Activated T-helper 2 cell treated with anti-CD3 and anti-CD28 coated beads, Interferon-gamma antibody, Interleukin-2, Interleukin-4, amounts not matched to agents 10 μg/mL and 5 μg/mL and 100 μg/mL, durations not matched to agents 14 hours and 24 hours and 36 hours (primary cell): ENCODE measurements at regions of chr18 and their contacts with region 1.

Region 1: GRCh38 chr18:5630057-5630899 is 86.5 kb upstream of the EPB41L3 start:
- DNase-seq: peak; percentile 24
- H3K4me3 Mint-ChIP-seq: no peak overlapping the region
- H3K27ac Mint-ChIP-seq: no peak overlapping the region
- H3K4me1 Mint-ChIP-seq: peaks cover 7% of the 10 kb centered on the region
- H3K27me3 Mint-ChIP-seq: peaks cover 30% of the 10 kb centered on the region

Region 2: DNA sequence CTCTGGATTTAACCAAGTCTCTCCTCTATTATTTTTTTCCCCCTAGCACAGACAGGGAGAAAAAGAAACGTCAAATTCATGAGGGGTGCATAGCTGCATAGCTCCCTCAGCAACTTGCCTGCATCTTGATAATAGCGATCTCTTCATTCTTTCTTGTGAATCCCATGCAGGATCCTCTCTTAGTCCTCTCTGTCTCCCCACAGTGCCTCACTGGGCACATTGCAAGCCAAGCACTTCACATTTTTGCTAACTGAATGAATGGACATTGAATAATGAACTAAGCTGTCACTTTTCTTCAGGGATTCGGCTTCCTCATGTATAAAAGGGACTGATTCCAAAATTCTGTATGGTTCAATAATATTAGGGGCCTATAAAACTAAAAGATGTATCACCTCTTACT is 83.6 kb before region 1 on chr18:
- intact Hi-C with region 1: loop called (anchors 10 kb)
- DNase-seq: no peak
- H3K4me3 Mint-ChIP-seq: no peak overlapping the region
- H3K27ac Mint-ChIP-seq: no peak overlapping the region
- H3K4me1 Mint-ChIP-seq: peaks cover 2% of the 10 kb centered on the region
- H3K27me3 Mint-ChIP-seq: peaks cover 32% of the 10 kb centered on the region

Region 3: DNA sequence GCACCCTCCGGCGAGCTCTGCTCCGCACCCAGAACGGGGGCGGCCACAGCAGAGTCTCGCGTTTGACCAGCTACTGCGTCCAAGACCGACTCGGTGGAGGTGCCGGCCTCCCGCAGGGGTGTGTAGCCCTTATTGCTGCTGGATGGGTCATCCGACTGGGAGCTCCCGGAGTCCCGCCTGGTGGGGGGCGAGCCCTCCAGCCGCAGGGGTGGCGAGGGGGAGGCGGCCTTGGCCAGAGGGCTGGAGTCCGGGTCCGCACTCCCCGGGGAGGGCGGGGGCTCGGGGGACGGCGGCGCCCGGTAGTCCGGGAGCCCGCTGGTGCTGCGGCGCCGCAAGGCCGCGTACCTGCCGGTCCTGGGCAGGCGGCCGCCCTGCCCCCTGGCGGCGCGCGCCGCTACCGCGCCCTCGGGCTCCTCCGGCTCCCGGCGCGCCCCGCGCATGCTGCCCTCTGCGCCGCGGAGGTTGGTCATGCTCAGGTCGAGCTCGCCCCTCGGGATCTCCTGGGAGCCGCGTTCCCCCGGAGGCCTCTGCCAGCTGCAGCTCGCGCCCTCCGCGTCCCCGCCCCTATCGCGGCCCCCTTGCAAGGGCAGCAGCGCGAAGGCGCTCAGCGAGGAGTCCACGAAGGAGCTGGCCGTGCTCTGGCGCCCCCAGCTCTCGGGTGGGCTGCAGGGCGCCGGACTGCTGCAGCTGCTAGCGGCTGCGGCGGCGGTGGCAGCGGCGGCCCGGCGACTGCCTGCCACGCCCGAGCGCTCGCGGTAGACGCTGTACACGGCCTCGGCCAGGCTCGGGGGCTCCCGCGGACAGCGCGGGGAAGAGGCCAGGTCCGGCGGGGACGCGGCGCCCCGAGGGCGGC is 260.3 kb after region 1 on chr18:
- intact Hi-C with region 1: loop called (anchors 5 kb)
- DNase-seq: no peak
- H3K4me3 Mint-ChIP-seq: no peak overlapping the region
- H3K27ac Mint-ChIP-seq: no peak overlapping the region
- H3K4me1 Mint-ChIP-seq: peaks cover 2% of the 10 kb centered on the region
- H3K27me3 Mint-ChIP-seq: peaks cover 58% of the 10 kb centered on the region